MCF 10A (cell line): ENCODE measurements at regions of chr6 and their contacts with region 1.

Region 1: DNA sequence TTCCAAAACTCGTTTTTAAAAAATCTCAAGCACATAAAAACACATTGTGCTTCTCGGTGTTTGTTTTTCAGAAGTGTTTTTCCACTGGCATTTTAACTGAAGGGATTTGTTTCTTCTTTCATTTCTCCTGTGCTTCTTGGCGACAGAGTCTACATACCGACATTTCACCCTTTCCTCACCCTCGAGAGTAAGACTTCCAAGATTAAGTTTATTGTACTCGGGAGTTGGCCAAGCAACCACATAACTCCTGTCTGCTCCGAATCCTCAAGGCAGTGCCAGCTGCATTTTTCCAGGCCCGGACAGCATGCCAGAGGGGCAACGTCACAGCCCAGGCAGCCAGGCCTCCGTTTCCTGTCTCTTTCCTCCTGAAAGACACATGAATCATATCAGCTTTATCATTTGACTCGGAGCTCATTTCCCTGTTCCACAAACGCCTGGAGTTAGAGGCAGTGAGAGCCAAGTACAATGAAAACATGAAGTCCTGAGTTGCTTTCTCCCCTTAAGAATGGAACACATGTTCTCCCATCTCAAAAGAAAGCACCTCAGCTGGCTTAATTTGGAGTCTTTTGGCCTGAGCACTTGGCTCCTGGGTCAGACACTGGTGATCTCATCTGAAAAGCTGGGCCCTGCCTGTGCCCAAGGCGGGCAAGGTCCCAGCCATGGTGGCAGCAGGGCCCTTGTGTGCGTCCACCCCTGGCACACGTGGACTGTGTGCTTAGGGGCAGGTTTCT is 23.2 kb upstream of the FAM50B start:
- DNase-seq: peak; percentile 94
- H3K4me3 Mint-ChIP-seq: peak overlapping the region; percentile 66
- H3K27ac Mint-ChIP-seq: peak overlapping the region; percentile 92
- H3K4me1 Mint-ChIP-seq: peaks cover 35% of the 10 kb centered on the region
- H3K27me3 Mint-ChIP-seq: no peaks in the 10 kb centered on the region
- CTCF ChIP-seq: no peak

Region 2: GRCh38 chr6:3808759-3809514 is 17.1 kb before region 1 on chr6:
- CTCF ChIA-PET with region 1: interaction called, 4 read pairs
- POLR2A ChIA-PET with region 1: interaction called, 17 read pairs
- intact Hi-C with region 1: loop called (anchors 2 kb)
- DNase-seq: peak; percentile 90
- H3K4me3 Mint-ChIP-seq: peak overlapping the region; percentile 36
- H3K27ac Mint-ChIP-seq: peak overlapping the region; percentile 89
- H3K4me1 Mint-ChIP-seq: peaks cover 38% of the 10 kb centered on the region
- H3K27me3 Mint-ChIP-seq: no peaks in the 10 kb centered on the region
- CTCF ChIP-seq: no peak

Region 3: GRCh38 chr6:3841711-3842565 is 15.9 kb after region 1 on chr6:
- CTCF ChIA-PET with region 1: interaction called, 6 read pairs
- POLR2A ChIA-PET with region 1: interaction called, 16 read pairs
- intact Hi-C with region 1: no loop called
- DNase-seq: peak; percentile 67
- H3K4me3 Mint-ChIP-seq: no peak overlapping the region
- H3K27ac Mint-ChIP-seq: peak overlapping the region; percentile 64
- H3K4me1 Mint-ChIP-seq: peaks cover 33% of the 10 kb centered on the region
- H3K27me3 Mint-ChIP-seq: no peaks in the 10 kb centered on the region
- CTCF ChIP-seq: no peak

Region 4: DNA sequence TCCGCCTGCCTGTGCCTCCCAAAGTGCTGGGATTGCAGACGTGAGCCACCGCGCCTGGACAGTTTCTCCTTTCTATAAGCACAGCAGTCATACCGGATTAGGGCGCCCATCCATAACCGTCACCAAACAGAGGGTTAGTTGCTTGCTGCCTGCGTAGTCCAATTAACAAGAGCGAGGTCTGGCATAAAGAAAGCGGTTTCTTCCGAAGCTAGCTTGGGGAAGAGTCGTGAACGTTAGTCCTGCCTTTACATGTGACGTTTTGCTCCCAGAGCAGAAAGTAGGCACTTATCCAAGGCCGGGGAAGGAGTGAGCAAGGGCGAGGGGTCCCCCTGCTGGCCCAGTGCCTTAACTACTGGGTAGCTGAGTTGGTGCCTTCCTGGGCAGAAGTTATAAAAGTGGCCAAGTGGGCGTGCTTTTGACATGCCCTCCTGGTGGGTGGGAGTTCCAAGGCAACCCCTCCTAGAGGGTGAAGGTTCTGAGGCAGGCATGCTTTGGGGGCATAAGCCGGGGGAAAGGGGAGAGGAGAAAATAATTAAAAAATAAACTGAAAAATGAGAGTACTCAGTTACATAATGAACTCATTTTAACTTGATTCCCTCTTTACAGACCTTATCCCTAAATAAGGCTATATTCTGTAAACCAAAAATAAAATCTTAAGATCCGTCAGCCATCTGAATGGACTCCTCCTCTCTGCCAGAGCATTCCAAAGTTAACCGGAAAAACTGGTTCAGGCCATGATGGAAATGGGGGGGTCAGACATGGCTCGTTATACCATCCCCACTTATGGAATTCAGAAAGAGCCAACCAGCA is 164.9 kb after region 1 on chr6:
- CTCF ChIA-PET with region 1: no interaction called
- POLR2A ChIA-PET with region 1: interaction called, 3 read pairs
- intact Hi-C with region 1: loop called (anchors 5 kb)
- DNase-seq: peak; percentile 87
- H3K4me3 Mint-ChIP-seq: peak overlapping the region; percentile 62
- H3K27ac Mint-ChIP-seq: peak overlapping the region; percentile 43
- H3K4me1 Mint-ChIP-seq: peaks cover 16% of the 10 kb centered on the region
- H3K27me3 Mint-ChIP-seq: no peaks in the 10 kb centered on the region
- CTCF ChIP-seq: peak; percentile 77